ENCODE measurements at regions of chr12 and their contacts with region 1.

Region 1: DNA sequence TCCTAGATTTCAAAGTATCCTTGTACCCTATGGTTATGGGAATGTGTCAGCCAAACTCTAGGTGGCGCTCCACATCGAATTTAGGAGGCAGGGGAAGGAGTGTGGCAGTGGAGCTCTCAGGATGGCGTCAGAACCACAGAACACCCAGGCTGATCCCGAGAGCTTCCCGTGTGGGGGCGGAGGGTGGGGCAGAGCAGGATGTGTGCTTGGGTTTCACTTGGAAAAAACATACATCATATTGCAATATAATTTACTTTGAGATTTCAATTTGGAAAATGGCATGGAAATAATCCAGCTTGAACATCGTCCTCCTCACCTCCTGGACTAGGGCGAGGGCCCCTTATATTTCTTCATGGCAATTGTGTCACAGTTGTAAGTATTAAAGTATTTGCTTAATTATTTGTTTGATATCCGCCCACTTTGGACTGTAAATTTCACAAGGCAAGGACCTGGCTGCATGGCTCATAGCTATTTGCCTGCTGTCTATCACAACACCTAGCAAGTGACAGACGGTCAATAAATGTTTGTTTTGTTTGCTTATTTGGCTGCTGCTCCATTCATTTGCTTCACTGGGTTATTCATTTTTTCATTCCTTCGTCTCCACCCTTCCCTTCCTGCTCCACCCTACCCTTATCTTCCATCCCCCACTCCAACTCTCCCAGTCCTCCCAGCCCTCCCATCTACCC is 221.5 kb upstream of the HMGA2 start:
- DNase-seq: peak; percentile 97
- ATAC-seq: peak; percentile 92
- H3K4me3 ChIP-seq: peak overlapping the region; percentile 50
- H3K27ac ChIP-seq: peak overlapping the region; percentile 95
- H3K4me1 ChIP-seq: peaks cover 12% of the 10 kb centered on the region
- H3K27me3 ChIP-seq: no peaks in the 10 kb centered on the region
- CTCF ChIP-seq: peak; percentile 89
- POLR2A ChIP-seq: peak; percentile 74
- RAD21 ChIP-seq: peak; percentile 93

Region 2: DNA sequence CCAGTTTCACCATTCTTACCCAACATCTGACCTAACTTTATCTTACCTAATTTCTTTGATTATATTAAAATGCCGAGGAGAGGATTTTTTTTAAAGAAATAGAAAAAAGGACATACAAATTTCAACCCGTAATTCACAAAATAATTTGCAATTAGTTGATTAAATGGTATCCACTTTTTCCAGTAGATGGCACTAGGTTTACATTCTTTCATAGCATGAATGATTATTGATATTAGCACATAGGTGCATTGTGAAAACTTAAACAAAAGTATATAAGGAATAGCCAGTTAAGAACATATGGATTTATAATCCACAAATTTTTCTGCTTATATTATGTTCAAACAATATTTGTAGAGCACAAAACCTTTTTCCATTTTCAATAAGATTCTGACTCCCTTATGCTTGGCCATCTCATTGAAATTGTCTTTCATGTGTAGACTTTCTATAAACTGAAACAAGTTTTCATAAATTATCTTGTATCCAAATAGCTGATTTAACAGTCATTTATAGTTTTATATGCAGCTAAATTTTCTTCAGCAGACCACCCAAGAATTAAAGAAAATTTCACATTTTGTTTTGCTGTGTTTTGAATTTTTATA is 288.9 kb before region 1 on chr12:
- CTCF ChIA-PET with region 1: interaction called, 3 read pairs
- POLR2A ChIA-PET with region 1: no interaction called
- dilution Hi-C with region 1: no loop called
- in situ Hi-C with region 1: no loop called
- intact Hi-C with region 1: loop called (anchors 1 kb)
- DNase-seq: peak; percentile 47
- ATAC-seq: peak; percentile 32; the same call in 1 of the 2 replicates
- H3K4me3 ChIP-seq: no peak overlapping the region
- H3K27ac ChIP-seq: no peak overlapping the region
- H3K4me1 ChIP-seq: 0 out of 2 replicates have a peak, but pooled peaks cover 1% of the 10 kb centered on the region
- H3K27me3 ChIP-seq: no peaks in the 10 kb centered on the region
- CTCF ChIP-seq: peak; percentile 62
- POLR2A ChIP-seq: no peak
- RAD21 ChIP-seq: peak; percentile 74

Region 3: GRCh38 chr12:65556681-65557437 is 45.9 kb before region 1 on chr12:
- CTCF ChIA-PET with region 1: interaction called, 9 read pairs
- POLR2A ChIA-PET with region 1: interaction called, 3 read pairs
- dilution Hi-C with region 1: no loop called
- in situ Hi-C with region 1: no loop called
- intact Hi-C with region 1: loop called (anchors 2 kb)
- DNase-seq: peak; percentile 85
- ATAC-seq: peak; percentile 99
- H3K4me3 ChIP-seq: no peak overlapping the region
- H3K27ac ChIP-seq: no peak overlapping the region; the same call in 1 of the 2 replicates
- H3K4me1 ChIP-seq: peaks cover 13% of the 10 kb centered on the region
- H3K27me3 ChIP-seq: no peaks in the 10 kb centered on the region
- CTCF ChIP-seq: peak; percentile 91
- POLR2A ChIP-seq: peak; percentile 54; the same call in 1 of the 2 replicates
- RAD21 ChIP-seq: peak; percentile 95

Region 4: GRCh38 chr12:65631621-65632111 is 28.9 kb after region 1 on chr12:
- CTCF ChIA-PET with region 1: interaction called, 5 read pairs
- POLR2A ChIA-PET with region 1: interaction called, 3 read pairs
- dilution Hi-C with region 1: no loop called
- in situ Hi-C with region 1: no loop called
- intact Hi-C with region 1: loop called (anchors 1 kb)
- DNase-seq: peak; percentile 100
- ATAC-seq: peak; percentile 79
- H3K4me3 ChIP-seq: no peak overlapping the region
- H3K27ac ChIP-seq: peak overlapping the region; percentile 78
- H3K4me1 ChIP-seq: peaks cover 22% of the 10 kb centered on the region
- H3K27me3 ChIP-seq: no peaks in the 10 kb centered on the region
- CTCF ChIP-seq: no peak
- POLR2A ChIP-seq: peak; percentile 57
- RAD21 ChIP-seq: peak; percentile 32; the same call in 1 of the 2 replicates

Region 5: DNA sequence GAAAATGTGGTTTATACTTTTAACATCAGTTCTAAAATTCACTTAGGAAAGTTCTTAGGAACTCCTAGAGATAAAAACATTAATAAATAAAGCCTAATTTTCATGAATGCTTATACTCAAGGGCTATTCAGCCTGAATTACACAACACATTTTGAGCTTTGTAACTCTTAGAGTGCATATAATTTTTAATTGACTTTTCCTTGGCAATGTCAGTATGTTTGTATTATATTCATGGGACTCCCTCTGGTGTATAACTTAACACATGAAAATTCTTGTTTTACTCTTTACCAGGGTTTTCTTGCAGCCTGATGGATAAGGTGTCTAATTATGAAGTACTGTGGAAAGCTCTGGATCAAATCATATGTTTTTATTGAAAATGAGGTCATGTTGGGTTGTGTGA is 71.0 kb after region 1 on chr12:
- CTCF ChIA-PET with region 1: interaction called, 5 read pairs
- POLR2A ChIA-PET with region 1: interaction called, 5 read pairs
- dilution Hi-C with region 1: no loop called
- in situ Hi-C with region 1: no loop called
- intact Hi-C with region 1: loop called (anchors 2 kb)
- DNase-seq: peak; percentile 51
- ATAC-seq: no peak; the same call in 1 of the 2 replicates
- H3K4me3 ChIP-seq: no peak overlapping the region
- H3K27ac ChIP-seq: no peak overlapping the region
- H3K4me1 ChIP-seq: peaks cover 17% of the 10 kb centered on the region
- H3K27me3 ChIP-seq: no peaks in the 10 kb centered on the region
- CTCF ChIP-seq: no peak; the same call in 1 of the 2 replicates
- POLR2A ChIP-seq: no peak
- RAD21 ChIP-seq: peak; percentile 45

Region 6: DNA sequence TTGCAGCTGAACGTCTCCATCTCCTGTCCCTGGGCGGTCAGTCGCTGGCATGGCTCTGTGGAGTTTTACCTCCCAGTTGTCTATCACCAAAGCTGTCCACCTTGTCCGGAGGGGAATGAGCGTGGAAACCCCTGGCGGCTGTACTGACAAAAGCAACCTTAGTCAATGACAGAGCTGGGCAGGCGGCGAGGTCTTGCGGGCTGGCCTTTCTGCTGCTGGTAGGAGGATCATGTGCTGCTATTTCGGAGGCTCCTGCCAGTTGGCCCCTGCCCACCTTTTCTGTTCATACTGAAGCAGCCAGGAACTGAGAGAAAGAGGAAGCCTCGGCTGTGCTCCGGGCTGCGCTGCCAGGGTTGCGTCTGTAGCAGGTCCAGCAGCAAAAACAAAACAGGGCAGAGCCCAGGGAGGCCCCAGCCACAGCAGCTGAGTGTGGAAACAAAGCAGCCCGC is 279.2 kb after region 1 on chr12:
- CTCF ChIA-PET with region 1: no interaction called
- POLR2A ChIA-PET with region 1: no interaction called
- dilution Hi-C with region 1: no loop called
- in situ Hi-C with region 1: no loop called
- intact Hi-C with region 1: loop called (anchors 5 kb)
- DNase-seq: peak; percentile 38
- ATAC-seq: no peak
- H3K4me3 ChIP-seq: no peak overlapping the region
- H3K27ac ChIP-seq: peak overlapping the region; percentile 70; the same call in 1 of the 2 replicates
- H3K4me1 ChIP-seq: peaks cover 29% of the 10 kb centered on the region
- H3K27me3 ChIP-seq: no peaks in the 10 kb centered on the region
- CTCF ChIP-seq: 0 out of 2 replicates have a peak, but pooled peaks have one; percentile 1
- POLR2A ChIP-seq: no peak
- RAD21 ChIP-seq: no peak

Region 7: GRCh38 chr12:66087365-66087943 is 484.7 kb after region 1 on chr12:
- CTCF ChIA-PET with region 1: interaction called, 3 read pairs
- POLR2A ChIA-PET with region 1: no interaction called
- dilution Hi-C with region 1: no loop called
- in situ Hi-C with region 1: no loop called
- intact Hi-C with region 1: loop called (anchors 1 kb)
- DNase-seq: peak; percentile 88
- ATAC-seq: peak; percentile 93
- H3K4me3 ChIP-seq: no peak overlapping the region
- H3K27ac ChIP-seq: no peak overlapping the region
- H3K4me1 ChIP-seq: peaks cover 4% of the 10 kb centered on the region
- H3K27me3 ChIP-seq: no peaks in the 10 kb centered on the region
- CTCF ChIP-seq: peak; percentile 89
- POLR2A ChIP-seq: peak; percentile 30; the same call in 1 of the 2 replicates
- RAD21 ChIP-seq: peak; percentile 91